Heart left ventricle (tissue), 16 donors: ENCODE measurements at regions of chr2 and their contacts with region 1.

Region 1: DNA sequence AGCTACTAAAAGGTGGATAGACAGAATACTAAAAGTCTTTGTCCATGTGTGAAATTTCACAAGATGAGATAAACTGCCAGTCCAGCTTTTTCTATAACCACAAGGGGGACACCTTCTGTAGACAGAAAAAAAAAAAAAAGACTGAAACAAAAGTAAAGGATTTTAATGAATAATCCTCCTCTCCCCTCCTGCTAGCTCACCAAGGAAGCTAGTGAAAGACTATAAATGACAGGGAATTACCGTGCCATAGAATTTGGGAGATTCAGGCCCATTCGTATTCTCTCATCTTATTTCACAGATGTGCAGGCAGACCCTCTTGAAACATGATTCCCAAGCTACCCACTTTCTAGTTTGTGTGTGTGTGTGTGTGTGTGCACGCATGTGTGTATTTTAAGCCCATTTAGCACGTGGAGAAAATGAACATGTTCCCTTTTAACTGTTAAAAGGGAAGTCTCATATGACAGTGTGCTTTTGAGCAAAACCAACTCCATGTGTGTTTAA is 36.3 kb upstream of the SLC8A1 start:
- DNase-seq: no peak
- ATAC-seq: peak in 3 of 4 donors; percentile 32 to 51 (median 46)
- H3K4me3 ChIP-seq: peak overlapping the region in 8 of 12 donors; percentile 6 to 62 (median 54)
- H3K27ac ChIP-seq: peak overlapping the region; percentile 37 to 82 (median 71)
- H3K4me1 ChIP-seq: peaks cover 0 to 60% (median 28%) of the 10 kb centered on the region in 12 donors
- H3K27me3 ChIP-seq: no peaks in the 10 kb centered on the region
- CTCF ChIP-seq: peak; percentile 31 to 65 (median 50)
- POLR2A ChIP-seq: no peak

Region 2: GRCh38 chr2:40511661-40512213 is 23.6 kb after region 1 on chr2:
- intact Hi-C with region 1: loop called in 1 of 10 experiments (anchors 2 kb)
- DNase-seq: peak in 3 of 5 donors; percentile 18 to 30 (median 29)
- ATAC-seq: peak; percentile 27 to 66 (median 49)
- H3K4me3 ChIP-seq: peak overlapping the region; percentile 24 to 67 (median 60)
- H3K27ac ChIP-seq: peak overlapping the region; percentile 64 to 97 (median 92)
- H3K4me1 ChIP-seq: peaks cover 0 to 34% (median 8%) of the 10 kb centered on the region in 12 donors
- H3K27me3 ChIP-seq: no peaks in the 10 kb centered on the region
- CTCF ChIP-seq: no peak
- POLR2A ChIP-seq: no peak

Region 3: DNA sequence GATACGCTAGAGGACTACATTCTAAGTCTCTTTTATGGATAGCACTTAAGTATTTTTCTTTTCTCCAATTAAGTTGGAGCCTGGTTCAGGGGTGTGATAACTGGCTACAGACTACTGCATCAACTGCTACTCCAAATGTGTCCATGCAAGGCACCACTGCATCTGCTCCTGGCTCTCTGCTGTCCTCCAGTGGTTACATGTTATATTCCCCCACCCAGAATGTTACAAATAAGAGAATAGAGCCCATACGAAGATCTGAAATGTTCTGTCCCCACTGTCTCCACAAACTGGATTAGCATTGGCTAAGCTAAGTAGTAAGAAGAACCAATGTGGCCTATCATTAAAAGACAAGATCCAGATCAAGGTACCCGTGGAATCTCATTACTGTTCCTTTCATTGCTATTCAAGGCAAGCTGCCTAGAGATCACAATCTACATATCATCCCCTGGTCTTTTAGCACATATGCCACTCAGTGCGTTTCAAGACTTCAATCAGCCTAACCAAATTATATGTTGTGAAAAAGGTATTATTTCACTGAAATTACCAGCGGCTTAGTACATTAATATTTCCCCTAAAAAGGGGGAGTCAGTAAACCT is 272.0 kb after region 1 on chr2:
- intact Hi-C with region 1: loop called in 1 of 10 experiments (anchors 10 kb)
- DNase-seq: peak in 4 of 5 donors; percentile 29 to 47 (median 33)
- ATAC-seq: peak; percentile 51 to 93 (median 89)
- H3K4me3 ChIP-seq: no peak overlapping the region
- H3K27ac ChIP-seq: peak overlapping the region in 1 of 12 donors; percentile 19
- H3K4me1 ChIP-seq: peaks cover 0 to 14% (median 6%) of the 10 kb centered on the region in 12 donors
- H3K27me3 ChIP-seq: no peaks in the 10 kb centered on the region
- CTCF ChIP-seq: peak; percentile 55 to 78 (median 66)
- POLR2A ChIP-seq: no peak